Transverse colon (tissue), 4 donors: ENCODE measurements at regions of chr19 and their contacts with region 1.

Region 1: DNA sequence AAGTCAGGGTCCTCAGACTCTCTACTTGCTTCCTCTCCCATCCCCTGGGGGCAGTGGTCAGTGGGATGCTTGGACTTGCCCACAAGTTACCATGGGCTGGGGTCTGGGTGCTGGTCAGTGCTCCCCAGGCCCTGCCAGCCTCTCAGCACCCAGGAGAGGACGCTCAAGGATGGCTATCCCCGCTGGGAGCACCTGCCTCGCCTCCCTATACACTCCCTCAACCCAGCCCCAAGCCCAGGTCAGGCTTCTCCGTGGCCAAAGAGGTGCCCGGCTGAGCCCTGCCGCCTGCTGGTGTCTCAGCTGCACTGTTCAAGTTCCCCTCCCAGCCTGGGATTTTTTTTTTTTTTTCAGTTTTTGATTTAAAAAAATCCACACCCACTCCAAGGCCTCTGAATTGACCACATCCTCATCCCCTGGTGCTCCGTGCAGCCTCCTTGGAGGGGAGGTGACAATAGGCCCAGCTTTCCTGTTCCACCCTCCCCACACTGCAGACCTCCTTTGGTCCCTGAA is 10.8 kb downstream of the F2RL3 start:
- DNase-seq: peak; percentile 58
- H3K4me3 ChIP-seq: no peak overlapping the region
- H3K27ac ChIP-seq: no peak overlapping the region
- H3K4me1 ChIP-seq: peaks cover 0 to 21% (median 11%) of the 10 kb centered on the region in 4 donors
- H3K27me3 ChIP-seq: no peaks in the 10 kb centered on the region
- CTCF ChIP-seq: peak; percentile 23 to 61 (median 44)
- EP300 ChIP-seq: no peak
- POLR2A ChIP-seq: no peak

Region 2: DNA sequence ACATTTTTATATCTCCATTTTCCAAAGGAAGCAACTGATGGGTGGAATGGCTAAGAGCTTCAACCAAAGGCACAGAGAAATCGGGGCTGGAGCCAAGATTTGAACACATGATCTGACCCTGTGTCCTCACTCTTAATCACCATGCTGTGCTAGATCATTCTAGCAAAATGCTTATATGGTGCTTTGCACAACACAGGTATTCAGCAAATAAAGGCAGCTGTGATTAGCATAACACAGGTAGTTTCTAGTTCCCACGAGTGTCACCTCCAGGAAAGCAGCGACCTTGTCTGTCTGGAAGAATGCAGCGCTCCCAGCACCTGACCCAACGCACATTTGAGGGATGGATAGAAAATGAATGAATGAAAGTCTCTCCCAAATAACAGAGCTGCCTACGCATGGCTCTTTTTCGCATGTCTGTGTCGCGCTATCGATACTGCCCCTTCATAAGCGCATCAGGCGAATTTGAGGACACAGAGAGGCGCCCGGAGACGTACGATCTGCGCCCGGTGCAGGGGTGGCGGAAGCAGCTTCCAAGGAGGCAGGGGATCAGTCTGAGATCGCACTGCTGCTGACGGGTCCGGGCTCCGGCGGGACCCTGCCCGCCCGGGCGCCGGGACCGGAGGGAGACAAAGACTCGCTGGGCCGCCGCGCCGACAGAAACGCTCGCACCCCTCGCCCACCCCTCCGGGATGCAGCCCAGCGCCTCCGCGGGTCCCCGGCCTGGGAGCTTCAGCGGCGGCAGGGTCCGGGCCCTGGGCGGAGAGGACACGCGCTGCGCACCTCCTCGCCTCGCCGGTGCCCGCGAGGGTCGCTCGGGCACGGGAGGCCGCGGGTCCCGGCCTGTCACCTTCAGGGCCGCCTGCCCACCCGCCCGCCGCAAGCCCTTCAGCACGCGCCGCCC is 428.5 kb before region 1 on chr19:
- in situ Hi-C with region 1: no loop called
- intact Hi-C with region 1: no loop called
- DNase-seq: peak; percentile 26
- H3K4me3 ChIP-seq: peak overlapping the region; percentile 66 to 100 (median 93)
- H3K27ac ChIP-seq: peak overlapping the region; percentile 88 to 93 (median 89)
- H3K4me1 ChIP-seq: peaks cover 21 to 30% (median 23%) of the 10 kb centered on the region in 4 donors
- H3K27me3 ChIP-seq: no peaks in the 10 kb centered on the region
- CTCF ChIP-seq: no peak
- EP300 ChIP-seq: no peak
- POLR2A ChIP-seq: no peak

Region 3: DNA sequence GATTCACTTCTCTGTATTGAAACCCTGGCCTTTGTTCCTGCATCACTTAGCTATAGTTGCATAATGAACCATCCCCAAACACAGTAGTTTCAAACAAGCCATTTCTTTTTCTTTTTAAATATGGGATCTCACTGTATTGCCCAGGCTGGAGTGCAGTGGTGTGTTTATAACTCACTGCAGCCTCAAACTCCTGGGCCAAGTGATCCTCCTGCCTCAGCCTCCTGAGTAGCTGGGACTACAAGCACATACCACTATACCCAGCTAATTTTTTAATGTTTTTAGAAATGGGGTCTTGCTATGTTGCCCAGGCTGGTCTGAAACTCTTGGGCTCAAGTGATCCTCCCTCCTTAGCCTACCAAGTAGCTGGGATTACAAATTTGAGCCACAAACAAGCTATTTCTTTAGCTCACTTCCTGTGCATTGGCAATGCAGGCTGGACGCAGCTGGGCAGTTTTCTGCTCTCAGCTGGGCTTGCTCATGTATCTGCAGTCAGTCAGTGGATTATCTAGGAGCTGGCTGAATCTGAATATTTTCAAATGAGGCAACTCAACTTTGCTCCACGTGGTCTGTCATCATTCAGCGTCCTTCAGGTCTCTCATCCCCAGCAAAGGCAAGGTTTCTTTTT is 120.0 kb before region 1 on chr19:
- in situ Hi-C with region 1: loop called in 1 of 4 experiments (anchors 10 kb)
- intact Hi-C with region 1: no loop called
- DNase-seq: no peak
- H3K4me3 ChIP-seq: no peak overlapping the region
- H3K27ac ChIP-seq: no peak overlapping the region
- H3K4me1 ChIP-seq: no peaks in the 10 kb centered on the region
- H3K27me3 ChIP-seq: no peaks in the 10 kb centered on the region
- CTCF ChIP-seq: no peak
- EP300 ChIP-seq: no peak
- POLR2A ChIP-seq: no peak

Region 4: GRCh38 chr19:16871871-16872270 is 27.8 kb before region 1 on chr19:
- in situ Hi-C with region 1: no loop called
- intact Hi-C with region 1: no loop called
- DNase-seq: peak; percentile 28
- H3K4me3 ChIP-seq: no peak overlapping the region
- H3K27ac ChIP-seq: peak overlapping the region; percentile 30 to 45 (median 40)
- H3K4me1 ChIP-seq: peaks cover 0 to 10% (median 0%) of the 10 kb centered on the region in 4 donors
- H3K27me3 ChIP-seq: no peaks in the 10 kb centered on the region
- CTCF ChIP-seq: no peak
- EP300 ChIP-seq: no peak
- POLR2A ChIP-seq: no peak